Activated CD4-positive, alpha-beta T cell treated with anti-CD3 and anti-CD28 coated beads, Interleukin-2, amount 10 ng/mL, durations not matched to agents 7 days and 5 days (primary cell): ENCODE measurements at regions of chr1 and their contacts with region 1.

Region 1: DNA sequence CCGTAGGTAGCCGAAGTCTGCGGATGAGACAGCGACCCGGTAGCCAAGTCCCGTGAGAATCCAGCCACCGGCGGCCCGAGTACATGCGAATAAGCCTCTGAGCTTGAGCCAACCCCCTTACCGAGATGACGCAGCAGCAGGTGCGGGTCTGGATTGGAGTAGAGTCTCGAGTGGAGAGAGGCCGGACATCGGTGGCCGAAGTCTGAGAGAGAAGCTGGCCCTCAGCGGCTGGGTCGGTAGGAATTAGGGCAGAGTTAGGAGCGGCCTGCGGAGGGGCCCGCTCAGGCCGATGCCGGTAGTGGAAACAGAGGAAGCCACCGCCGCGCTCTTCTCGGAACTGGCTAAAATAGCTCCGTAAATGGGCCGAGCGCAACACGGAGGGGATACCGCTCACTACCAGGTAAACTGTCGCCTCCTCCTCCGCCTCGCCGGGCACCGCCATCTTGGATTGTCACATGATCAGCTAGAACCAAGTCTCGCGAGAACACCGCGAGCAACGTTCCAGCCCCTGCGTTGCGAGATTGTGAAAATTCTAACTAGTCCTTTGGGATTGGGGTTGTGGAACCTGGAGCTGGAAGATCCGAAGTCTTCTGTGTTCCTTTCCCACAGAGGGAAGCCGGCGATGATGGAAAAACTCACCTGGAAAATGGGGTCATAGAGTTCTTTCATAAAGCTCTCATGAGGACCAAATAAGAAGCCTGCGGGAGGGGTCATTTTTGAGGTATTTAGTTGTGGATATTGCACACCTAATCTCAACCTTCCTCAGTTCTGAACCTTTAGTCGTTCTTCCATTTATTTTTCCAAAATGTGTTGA is at the start of gene GPATCH3:
- DNase-seq: peak; percentile 94
- H3K4me3 Mint-ChIP-seq: peak within 1 kb of the TSS; percentile 91
- H3K27ac Mint-ChIP-seq: peak within 1 kb of the TSS; percentile 99
- H3K4me1 Mint-ChIP-seq: peaks cover 35% of the 10 kb centered on the region
- H3K27me3 Mint-ChIP-seq: no peaks in the 10 kb centered on the region
- total RNA-seq, gene GPATCH3: 14.0 to 14.8 TPM

Region 2: DNA sequence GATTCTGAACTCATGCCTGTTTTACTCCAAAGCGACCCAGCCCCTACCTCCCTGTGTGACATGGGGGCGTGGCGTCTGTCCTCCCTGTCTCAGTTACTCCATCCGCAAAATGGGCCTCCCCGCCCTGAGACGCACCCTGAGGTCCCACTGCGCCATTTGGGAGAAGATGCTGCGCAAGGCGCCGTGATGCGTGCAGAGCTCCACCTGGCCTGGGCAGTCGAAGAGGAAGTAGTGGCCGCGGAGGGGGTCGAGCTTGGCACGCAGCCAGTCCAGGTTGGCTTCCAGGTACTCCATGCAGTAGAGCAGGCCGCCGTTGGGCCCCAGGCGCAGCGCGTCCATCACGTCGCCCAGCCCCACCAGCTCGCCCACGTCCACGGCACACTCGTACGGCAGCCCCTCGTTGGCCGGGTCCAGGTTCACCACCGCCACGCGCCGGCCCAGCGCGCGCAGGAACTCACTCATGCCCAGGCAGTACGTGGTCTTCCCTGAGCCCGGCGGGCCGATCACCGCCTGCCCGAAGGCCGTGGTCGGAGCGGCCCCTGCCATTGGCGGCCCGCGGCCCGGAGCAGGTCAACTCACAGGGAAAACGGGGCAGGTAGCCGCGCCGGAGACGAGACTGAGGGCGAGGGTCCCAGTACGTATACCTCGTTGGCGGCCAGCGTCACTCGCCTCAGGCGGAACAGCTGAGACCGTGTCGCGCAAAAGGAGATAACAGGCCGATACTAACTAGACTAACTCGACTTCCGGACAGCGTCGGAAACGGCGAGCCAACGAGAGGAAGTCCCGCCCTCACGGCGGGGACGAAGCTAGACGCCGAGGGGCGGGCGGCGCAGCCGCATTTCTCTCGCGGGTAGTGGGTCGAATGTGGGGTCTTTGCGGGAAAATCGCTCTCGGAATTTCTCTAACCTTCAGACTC is 10.4 kb before region 1 on chr1 and contains the start of gene GPN2:
- CTCF ChIA-PET with region 1: interaction called, 11 read pairs
- POLR2A ChIA-PET with region 1: interaction called, 5 read pairs
- DNase-seq: peak; percentile 85
- H3K4me3 Mint-ChIP-seq: peak within 1 kb of the TSS; percentile 94
- H3K27ac Mint-ChIP-seq: peak within 1 kb of the TSS; percentile 95
- H3K4me1 Mint-ChIP-seq: peaks cover 34% of the 10 kb centered on the region
- H3K27me3 Mint-ChIP-seq: no peaks in the 10 kb centered on the region
- total RNA-seq, gene GPN2: 25.9 to 26.9 TPM